ENCODE measurements at regions of chr12 and their contacts with region 1.

Region 1: GRCh38 chr12:108562348-108563135 is at the start of gene ISCU:
- ATAC-seq: peak; percentile 59 to 89 (median 84)
- H3K4me3 ChIP-seq: peak within 1 kb of the TSS; percentile 86 to 96 (median 88)
- H3K27ac ChIP-seq: peak within 1 kb of the TSS; percentile 91 to 98
- H3K4me1 ChIP-seq: peaks cover 9 to 10% of the 10 kb centered on the region in 2 donors
- total RNA-seq, gene ISCU: 74.4 to 244 (median 90.2) TPM

Region 2: DNA sequence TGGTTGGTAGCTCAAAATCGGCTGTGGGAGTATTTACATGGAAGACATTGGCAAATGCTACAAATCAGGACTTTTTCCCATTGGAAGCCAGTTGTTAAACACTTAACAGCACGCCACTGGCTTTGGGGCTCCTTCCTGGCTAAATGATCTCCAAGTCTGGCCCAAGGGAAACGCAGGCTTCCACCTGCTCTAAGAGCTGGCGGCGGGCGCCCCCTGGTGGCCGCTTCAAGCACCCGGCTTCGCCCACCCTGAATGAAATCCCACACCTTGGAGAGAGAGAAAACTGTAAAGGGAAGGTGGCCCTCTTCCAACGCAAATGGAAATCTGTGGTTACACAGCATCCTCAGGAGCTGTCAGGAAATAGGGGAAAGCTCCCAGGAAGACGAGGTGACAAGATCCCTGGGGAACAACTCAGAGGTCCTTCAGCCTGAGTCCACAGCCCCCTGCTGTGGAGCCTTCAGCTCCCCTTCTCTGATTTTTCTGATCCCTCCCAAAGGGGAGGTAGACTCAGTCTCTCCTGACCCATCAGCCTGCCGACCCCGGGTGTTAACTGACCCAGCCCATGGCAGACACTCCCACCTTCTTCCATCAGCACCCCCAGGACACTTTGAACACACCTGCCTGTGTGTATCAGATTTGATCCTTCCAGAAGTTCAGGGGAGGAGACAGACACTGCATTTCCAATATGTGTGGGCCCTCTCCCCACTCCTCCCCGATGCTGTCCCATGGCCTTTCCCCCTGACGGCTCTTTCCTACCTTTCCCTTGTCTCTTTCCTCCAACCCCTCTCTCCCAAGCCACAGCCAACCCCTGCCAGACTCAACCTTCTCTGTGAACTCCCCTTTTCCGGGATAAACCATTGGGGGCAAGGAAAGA is 55.8 kb after region 1 on chr12:
- in situ Hi-C with region 1: loop called in 2 of 9 experiments (anchors 5 to 10 kb)
- ATAC-seq: peak; percentile 84 to 98 (median 95)
- H3K4me3 ChIP-seq: no peak overlapping the region
- H3K27ac ChIP-seq: no peak overlapping the region
- H3K4me1 ChIP-seq: peaks cover 4 to 6% of the 10 kb centered on the region in 2 donors

Measured in motor neuron (in vitro differentiated cells).